ENCODE measurements at regions of chr17 and their contacts with region 1.

Region 1: DNA sequence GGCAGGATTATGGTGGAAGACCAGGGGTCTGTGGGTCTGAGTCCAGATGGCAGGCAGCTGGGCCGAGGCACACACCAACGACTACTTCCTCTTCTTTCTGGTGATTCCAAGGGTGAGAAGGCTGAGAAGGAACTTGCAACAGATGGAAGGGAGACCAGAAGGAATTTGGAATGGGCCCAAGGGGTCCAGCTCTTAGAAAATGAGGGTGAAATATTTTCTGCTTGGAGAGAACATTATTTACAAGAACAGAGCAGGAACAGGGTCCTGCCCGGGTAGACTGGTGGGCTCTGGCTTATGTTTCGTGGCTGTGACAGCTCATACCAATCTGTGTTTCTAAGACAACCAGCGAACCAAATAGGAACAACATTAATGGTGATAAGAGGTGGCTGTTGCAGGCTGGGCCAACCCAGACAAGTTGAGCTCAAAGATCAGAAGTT is 36.6 kb downstream of the CCDC42 start:
- DNase-seq: peak in 1 of 2 donors; percentile 64
- ATAC-seq: peak; percentile 81
- H3K4me3 ChIP-seq: no peak overlapping the region
- H3K27ac ChIP-seq: peak overlapping the region; percentile 86 to 90
- H3K4me1 ChIP-seq: peaks cover 4% of the 10 kb centered on the region in 2 donors
- H3K27me3 ChIP-seq: no peaks in the 10 kb centered on the region

Region 2: DNA sequence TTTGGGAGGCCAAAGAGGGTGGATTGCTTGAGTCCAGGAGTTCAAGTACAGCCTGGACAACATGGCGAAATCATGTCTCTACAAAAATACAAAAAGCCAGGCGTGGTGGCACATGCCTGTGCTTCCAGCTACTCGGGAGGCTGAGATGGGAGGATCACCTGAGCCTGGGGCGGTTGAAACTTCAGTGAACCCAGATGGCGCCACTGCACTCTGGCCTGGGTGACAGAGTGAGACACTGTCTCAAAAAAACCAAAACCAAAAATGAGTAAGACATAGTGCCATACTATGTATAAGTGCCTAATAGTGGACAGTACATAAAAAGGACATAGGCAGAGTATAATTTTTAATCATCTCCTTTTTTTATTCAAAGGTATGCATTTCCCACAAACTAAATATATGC is 464.2 kb before region 1 on chr17:
- intact Hi-C with region 1: no loop called
- DNase-seq: no peak
- ATAC-seq: no peak
- H3K4me3 ChIP-seq: no peak overlapping the region
- H3K27ac ChIP-seq: no peak overlapping the region
- H3K4me1 ChIP-seq: no peaks in the 10 kb centered on the region
- H3K27me3 ChIP-seq: no peaks in the 10 kb centered on the region

Region 3: DNA sequence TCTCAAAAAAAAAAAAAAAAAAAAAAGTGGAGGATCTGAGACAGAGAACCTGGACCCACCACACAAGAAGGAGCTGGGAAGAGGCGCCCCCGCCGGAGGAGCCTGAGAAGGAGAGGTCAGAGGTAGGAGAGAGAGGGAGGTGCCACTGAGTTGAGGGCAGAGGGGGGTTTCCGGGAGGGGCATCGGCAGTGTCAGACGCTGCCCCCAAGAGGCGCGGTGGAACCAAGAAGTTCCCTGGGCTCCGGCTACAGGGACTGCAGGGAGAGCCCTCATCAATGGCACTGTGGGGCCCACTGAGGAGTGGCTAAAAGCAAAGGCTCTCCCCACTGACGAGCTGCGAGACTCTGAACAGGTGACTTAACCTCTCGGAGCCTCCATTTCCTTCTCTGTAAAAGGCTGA is 32.4 kb after region 1 on chr17:
- intact Hi-C with region 1: loop called in 1 of 2 experiments (anchors 5 kb)
- DNase-seq: no peak
- ATAC-seq: no peak
- H3K4me3 ChIP-seq: no peak overlapping the region
- H3K27ac ChIP-seq: no peak overlapping the region
- H3K4me1 ChIP-seq: no peaks in the 10 kb centered on the region
- H3K27me3 ChIP-seq: no peaks in the 10 kb centered on the region

Measured in aorta (tissue), 5 donors.